AG04449 (cell line): ENCODE measurements at regions of chr12 and their contacts with region 1.

Region 1: DNA sequence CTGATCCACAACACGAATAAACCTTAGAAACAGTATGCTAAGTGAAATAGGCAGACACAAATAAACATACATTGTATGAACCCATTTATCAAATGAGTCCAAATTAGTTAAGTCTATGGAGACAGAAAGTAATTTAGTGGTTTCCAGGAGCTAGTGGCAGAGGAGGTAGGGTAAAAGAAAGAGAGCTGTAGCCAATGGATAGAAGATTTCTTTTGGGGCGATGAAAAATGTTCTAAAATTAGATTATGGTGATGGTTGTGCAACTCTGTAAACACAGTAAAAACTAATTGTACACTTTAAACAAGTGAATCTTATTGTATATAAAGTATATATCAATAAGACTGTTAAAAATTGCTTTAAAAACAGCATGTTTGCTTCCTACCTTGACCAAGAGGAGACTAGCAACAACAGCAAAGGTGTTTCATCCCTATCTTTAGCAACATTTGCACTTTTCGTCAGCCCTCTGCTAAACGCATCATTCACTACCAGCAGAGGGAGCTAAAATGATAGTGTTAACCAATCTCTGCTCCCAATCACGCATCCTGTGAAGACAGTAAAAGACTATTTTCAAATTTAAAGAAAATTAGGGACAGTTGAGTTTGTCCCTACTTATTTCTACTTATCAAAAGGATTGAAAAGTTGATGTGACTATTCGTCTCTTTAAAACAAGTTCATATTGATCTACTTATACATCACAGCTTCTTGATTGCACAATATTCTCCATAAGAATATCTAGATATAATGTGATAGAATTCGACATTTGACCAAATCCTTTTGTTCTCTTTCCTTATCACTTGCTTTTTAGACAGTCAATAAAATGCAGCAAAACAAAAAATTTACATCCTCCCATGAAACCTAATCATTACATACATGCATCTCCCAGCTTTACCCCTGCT is 24.0 kb upstream of the LGR5 start:
- DNase-seq: no peak
- H3K4me3 ChIP-seq: no peak overlapping the region
- CTCF ChIP-seq: peak; percentile 76

Region 2: DNA sequence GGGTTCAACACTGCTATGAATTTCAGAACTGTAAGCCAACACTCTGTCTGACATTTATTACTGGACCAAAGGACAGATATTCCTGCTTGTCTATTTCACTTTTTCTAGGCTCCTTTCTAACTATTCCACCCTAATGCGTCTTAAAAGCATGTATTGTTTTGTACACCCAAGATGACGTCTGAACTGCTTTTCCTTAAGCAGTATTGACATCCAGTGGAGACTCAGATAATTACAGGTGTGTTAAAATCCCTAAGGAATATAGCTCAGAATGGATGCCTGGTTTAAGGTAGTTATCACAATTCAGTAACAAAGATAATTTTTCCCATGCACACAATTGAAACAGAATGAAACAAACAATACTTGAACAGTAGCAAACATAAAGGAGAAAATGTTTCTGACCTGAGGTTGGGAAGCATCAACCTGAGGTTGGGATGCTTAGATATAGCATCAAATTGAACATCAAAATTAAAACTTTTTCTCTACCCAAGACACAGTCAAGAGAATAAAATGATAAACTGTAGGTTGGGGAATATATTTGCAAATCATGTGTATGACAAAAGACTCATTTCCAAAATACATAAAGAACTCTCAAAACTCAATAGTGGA is 401.3 kb before region 1 on chr12:
- CTCF ChIA-PET with region 1: no interaction called
- POLR2A ChIA-PET with region 1: no interaction called
- DNase-seq: no peak
- H3K4me3 ChIP-seq: no peak overlapping the region
- CTCF ChIP-seq: peak; percentile 20

Region 3: GRCh38 chr12:71400481-71400880 is 15.1 kb before region 1 on chr12:
- CTCF ChIA-PET with region 1: interaction called, 30 read pairs
- POLR2A ChIA-PET with region 1: no interaction called
- DNase-seq: no peak
- H3K4me3 ChIP-seq: no peak overlapping the region
- CTCF ChIP-seq: no peak

Region 4: GRCh38 chr12:71430756-71431155 is 15.2 kb after region 1 on chr12:
- CTCF ChIA-PET with region 1: interaction called, 20 read pairs
- POLR2A ChIA-PET with region 1: no interaction called
- DNase-seq: no peak
- H3K4me3 ChIP-seq: no peak overlapping the region
- CTCF ChIP-seq: no peak

Region 5: DNA sequence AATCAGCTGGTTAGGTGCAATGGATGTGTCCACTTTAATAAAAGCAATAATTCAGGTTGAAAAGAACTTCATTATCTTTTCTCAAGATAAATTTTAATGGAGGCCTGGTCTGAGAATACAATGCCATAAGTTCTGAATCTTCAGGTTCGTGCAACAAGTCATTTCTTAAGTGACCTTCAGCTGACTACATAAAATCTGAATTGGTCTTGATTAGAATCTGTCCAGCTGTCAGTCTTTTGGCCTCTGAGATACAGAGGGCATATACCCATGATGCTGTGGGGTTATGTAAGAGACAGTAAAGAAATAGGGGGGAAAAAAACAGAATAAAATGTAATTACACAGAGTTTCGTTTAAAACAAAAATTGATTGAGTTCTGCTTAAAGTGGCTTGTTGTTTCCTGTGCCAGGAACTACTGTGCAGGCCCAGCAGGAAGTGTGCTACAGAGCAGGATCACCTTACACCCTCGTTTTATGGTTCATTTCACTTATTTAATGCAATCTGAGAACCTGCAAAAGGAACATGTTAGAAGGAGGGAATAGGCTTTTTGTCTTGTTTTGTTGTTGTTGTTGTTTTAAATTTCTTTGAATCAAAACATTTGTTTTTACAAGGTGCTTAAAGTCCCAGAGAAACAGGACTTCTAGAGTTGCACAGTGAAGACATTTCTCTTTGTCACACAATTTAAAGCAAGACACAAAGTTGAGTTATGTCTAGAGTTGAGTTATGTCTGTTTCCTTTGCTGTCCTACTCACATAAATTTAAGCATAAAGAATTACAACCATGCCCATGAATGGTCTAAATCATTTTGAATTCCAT is 88.2 kb after region 1 on chr12:
- CTCF ChIA-PET with region 1: no interaction called
- POLR2A ChIA-PET with region 1: no interaction called
- DNase-seq: no peak
- H3K4me3 ChIP-seq: no peak overlapping the region
- CTCF ChIP-seq: no peak

Region 6: GRCh38 chr12:71551529-71551928 is 135.9 kb after region 1 on chr12:
- CTCF ChIA-PET with region 1: interaction called, 141 read pairs
- POLR2A ChIA-PET with region 1: no interaction called
- DNase-seq: no peak
- H3K4me3 ChIP-seq: no peak overlapping the region
- CTCF ChIP-seq: peak; percentile 47

Region 7: GRCh38 chr12:71556881-71557280 is 141.3 kb after region 1 on chr12:
- CTCF ChIA-PET with region 1: interaction called, 141 read pairs
- POLR2A ChIA-PET with region 1: no interaction called
- DNase-seq: peak; percentile 74
- H3K4me3 ChIP-seq: no peak overlapping the region
- CTCF ChIP-seq: no peak

Region 8: DNA sequence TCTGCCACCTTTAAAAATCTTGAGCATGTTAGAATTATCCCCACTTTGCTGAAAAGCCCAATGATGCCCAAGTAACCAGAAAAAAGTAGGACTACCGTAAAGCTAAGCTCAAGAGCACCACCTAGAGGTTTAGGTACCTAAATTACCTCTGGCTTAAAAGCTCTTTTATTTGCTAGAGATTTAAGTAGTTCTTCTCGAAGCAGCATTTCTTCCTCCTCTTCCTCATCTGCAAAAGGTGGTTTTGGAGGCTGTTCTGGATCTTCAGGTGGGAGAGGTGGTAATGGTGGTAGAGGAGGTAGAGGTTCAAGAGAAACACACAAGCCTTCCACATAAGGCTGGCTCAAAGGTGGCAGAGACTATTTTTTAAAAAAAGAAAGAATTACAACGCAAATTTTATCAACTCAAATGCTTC is 221.1 kb after region 1 on chr12:
- CTCF ChIA-PET with region 1: interaction called, 17 read pairs
- POLR2A ChIA-PET with region 1: interaction called, 3 read pairs
- DNase-seq: no peak
- H3K4me3 ChIP-seq: no peak overlapping the region
- CTCF ChIP-seq: peak; percentile 65